Cardiac septum (tissue), 1 donor: ENCODE measurements at regions of chrX and their contacts with region 1.

Region 1: GRCh38 chrX:107729547-107730297 is 45.9 kb downstream of the TSC22D3 start:
- DNase-seq: peak; percentile 84

Region 2: GRCh38 chrX:107747596-107748161 is 18.0 kb after region 1 on chrX:
- intact Hi-C with region 1: loop called (anchors 2 kb)
- DNase-seq: no peak